ENCODE measurements at regions of chr4 and their contacts with region 1.

Region 1: DNA sequence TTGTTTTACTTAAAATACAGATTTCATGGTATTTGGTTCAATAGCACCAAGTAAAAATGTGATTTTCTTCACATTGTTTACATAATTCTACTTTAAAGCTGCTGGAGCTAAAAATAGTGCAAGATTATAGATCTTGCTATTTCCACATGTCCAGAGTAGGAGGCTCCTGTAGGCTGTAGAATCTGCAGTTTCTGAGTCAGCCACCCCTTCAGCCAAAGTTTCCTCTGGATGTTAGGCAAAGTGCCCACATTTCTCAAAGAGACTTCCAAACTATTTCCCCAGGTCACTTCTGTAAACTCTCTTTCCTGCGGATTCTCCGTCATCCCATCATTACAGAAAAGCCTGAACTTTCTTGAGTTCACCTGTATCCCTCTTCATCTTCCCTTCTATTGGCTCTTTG is 342.5 kb upstream of the FSTL5 start:
- DNase-seq: no peak
- ATAC-seq: no peak
- H3K4me3 ChIP-seq: no peak overlapping the region
- H3K27ac ChIP-seq: no peak overlapping the region
- H3K4me1 ChIP-seq: no peaks in the 10 kb centered on the region
- H3K27me3 ChIP-seq: no peaks in the 10 kb centered on the region
- CTCF ChIP-seq: no peak
- POLR2A ChIP-seq: no peak

Region 2: DNA sequence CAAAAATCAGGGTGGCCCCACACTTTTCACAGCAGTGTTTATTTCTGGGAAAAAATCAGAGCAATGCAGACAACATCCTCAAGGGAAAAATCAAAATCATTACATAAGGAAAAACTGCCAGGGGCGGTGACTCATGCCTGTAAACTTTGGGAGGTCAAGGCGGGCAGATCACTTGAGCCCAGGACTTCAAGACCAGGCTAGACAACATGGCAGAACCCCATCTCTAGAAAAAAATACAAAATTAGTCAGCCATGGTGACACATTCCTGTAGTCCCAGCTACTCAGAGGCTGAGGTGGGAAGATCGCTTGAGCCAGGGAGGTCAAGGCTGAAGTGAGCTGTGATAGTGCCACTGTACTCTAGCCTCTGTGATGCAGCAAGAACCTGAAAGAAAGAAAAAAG is 557.6 kb after region 1 on chr4:
- in situ Hi-C with region 1: loop called in 1 of 4 experiments (anchors 25 kb)
- intact Hi-C with region 1: no loop called
- DNase-seq: no peak
- ATAC-seq: no peak
- H3K4me3 ChIP-seq: no peak overlapping the region
- H3K27ac ChIP-seq: no peak overlapping the region
- H3K4me1 ChIP-seq: no peaks in the 10 kb centered on the region
- H3K27me3 ChIP-seq: no peaks in the 10 kb centered on the region
- CTCF ChIP-seq: no peak
- POLR2A ChIP-seq: no peak

Measured in gastrocnemius medialis (tissue), 4 donors.